Endothelial cell of umbilical vein (primary cell): ENCODE measurements at regions of chr11 and their contacts with region 1.

Region 1: GRCh38 chr11:86456052-86456939 is 81.6 kb downstream of the CCDC81 start:
- DNase-seq: peak; percentile 87
- H3K4me3 ChIP-seq: no peak overlapping the region
- H3K27ac ChIP-seq: peak overlapping the region; percentile 72
- H3K4me1 ChIP-seq: peaks cover 53% of the 10 kb centered on the region
- H3K27me3 ChIP-seq: no peaks in the 10 kb centered on the region
- CTCF ChIP-seq: peak; percentile 80 to 86
- POLR2A ChIP-seq: no peak

Region 2: DNA sequence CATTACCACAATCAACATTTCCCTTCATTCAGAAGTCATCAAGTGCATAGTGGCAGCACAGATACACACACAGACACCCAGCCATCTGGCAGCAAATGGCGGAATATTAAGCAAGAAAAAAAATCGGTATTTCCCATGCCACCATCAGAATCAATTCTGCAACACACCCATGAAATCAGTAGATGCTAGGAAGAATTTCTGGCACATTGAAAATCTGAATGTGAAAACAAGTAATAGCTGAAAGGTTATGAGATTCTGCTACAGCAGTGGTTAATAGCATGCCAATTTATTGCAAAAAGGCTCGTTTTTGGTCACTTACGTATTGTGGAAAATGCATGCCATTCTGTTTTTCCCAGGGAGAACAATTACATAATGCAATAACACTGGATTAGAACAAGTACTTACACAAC is 478.5 kb before region 1 on chr11:
- CTCF ChIA-PET with region 1: no interaction called
- POLR2A ChIA-PET with region 1: no interaction called
- dilution Hi-C with region 1: no loop called
- intact Hi-C with region 1: no loop called
- DNase-seq: no peak
- H3K4me3 ChIP-seq: no peak overlapping the region
- H3K27ac ChIP-seq: no peak overlapping the region
- H3K4me1 ChIP-seq: no peaks in the 10 kb centered on the region
- H3K27me3 ChIP-seq: no peaks in the 10 kb centered on the region
- CTCF ChIP-seq: no peak
- POLR2A ChIP-seq: no peak

Region 3: DNA sequence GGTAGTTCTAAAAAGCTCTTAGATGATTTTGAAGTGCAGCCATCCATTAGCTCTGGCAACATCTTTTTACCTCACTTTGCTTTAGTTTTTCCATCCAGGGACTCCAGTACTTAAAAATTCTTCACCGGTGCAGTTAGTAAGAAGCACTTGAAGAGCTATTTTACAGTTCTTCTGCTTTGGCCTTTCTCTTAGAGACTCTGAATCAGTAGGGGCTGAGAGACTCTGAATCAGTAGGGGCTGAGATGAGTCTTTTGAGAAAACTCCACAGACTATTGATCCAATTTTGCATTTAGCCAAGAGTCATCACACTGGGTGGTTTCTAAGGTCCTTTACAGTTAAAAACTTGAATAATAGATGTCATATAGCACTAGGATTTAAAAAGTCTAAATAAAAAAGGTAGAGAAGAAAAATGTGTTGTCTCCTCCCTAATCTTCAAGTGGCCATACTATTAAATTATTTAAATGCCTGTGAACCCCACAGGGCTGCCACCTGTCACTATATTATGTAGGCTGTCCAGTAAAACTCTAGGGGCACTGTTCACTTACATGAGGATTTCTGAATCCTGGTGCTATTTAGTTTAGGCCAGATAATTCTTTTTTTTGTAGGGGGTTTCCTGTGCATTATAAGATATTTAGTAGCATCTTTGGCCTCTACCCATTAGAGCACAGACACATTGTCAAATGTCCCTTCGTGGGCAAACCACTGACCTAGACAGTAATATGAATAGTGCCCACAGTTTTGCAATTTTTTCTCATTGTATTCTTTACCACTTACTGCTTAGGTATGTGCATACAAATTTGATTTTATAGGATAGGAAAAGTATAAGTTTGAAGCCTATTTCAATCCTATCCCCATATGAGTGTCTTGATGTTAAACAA is 180.6 kb before region 1 on chr11:
- CTCF ChIA-PET with region 1: no interaction called
- POLR2A ChIA-PET with region 1: no interaction called
- dilution Hi-C with region 1: no loop called
- intact Hi-C with region 1: no loop called
- DNase-seq: no peak
- H3K4me3 ChIP-seq: no peak overlapping the region
- H3K27ac ChIP-seq: no peak overlapping the region
- H3K4me1 ChIP-seq: no peaks in the 10 kb centered on the region
- H3K27me3 ChIP-seq: no peaks in the 10 kb centered on the region
- CTCF ChIP-seq: no peak
- POLR2A ChIP-seq: no peak

Region 4: GRCh38 chr11:86403458-86403857 is 52.8 kb before region 1 on chr11:
- CTCF ChIA-PET with region 1: no interaction called
- POLR2A ChIA-PET with region 1: no interaction called
- dilution Hi-C with region 1: no loop called
- intact Hi-C with region 1: no loop called
- DNase-seq: no peak
- H3K4me3 ChIP-seq: no peak overlapping the region
- H3K27ac ChIP-seq: no peak overlapping the region
- H3K4me1 ChIP-seq: no peaks in the 10 kb centered on the region
- H3K27me3 ChIP-seq: no peaks in the 10 kb centered on the region
- CTCF ChIP-seq: no peak
- POLR2A ChIP-seq: no peak

Region 5: GRCh38 chr11:86483940-86484794 is 27.9 kb after region 1 on chr11:
- CTCF ChIA-PET with region 1: interaction called, 20 read pairs
- POLR2A ChIA-PET with region 1: interaction called, 15 read pairs
- dilution Hi-C with region 1: no loop called
- intact Hi-C with region 1: loop called (anchors 1 kb)
- DNase-seq: peak; percentile 100
- H3K4me3 ChIP-seq: no peak overlapping the region
- H3K27ac ChIP-seq: peak overlapping the region; percentile 94
- H3K4me1 ChIP-seq: peaks cover 47% of the 10 kb centered on the region
- H3K27me3 ChIP-seq: no peaks in the 10 kb centered on the region
- CTCF ChIP-seq: no peak
- POLR2A ChIP-seq: peak; percentile 39

Region 6: DNA sequence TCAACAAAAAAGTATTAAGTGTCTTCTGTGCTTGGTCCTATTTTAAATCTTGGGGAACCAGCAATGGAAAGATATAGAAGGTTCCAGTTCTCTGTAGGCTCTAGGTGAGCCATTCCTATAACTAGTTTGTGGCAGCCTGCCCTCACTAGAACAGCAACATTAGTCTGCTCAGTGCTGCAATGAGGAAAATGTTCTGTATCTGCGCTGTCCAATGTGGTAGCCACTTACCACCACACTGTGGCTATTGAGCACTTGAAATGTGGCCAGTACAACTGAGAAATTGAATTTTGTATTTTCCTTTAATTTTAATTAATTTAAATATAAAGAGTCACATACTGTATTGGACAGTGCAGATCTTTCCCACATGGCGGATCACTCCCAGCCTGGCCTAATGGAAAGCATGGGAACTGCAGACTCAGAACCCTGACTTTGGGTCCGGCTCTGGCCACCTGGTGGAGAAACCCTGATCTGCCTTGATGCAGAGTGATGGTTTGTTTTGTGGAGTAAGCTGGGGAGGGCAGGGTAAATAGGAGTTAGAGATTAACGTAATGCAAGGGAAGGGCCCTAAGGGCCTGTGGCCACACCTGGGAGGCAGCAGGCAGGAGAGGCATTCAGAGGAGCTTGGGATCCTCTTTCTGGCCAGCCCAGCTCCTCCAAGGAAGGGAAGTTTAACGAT is 115.1 kb after region 1 on chr11:
- CTCF ChIA-PET with region 1: interaction called, 4 read pairs
- POLR2A ChIA-PET with region 1: no interaction called
- dilution Hi-C with region 1: no loop called
- intact Hi-C with region 1: loop called (anchors 1 kb)
- DNase-seq: peak; percentile 37
- H3K4me3 ChIP-seq: no peak overlapping the region
- H3K27ac ChIP-seq: no peak overlapping the region
- H3K4me1 ChIP-seq: peaks cover 38% of the 10 kb centered on the region
- H3K27me3 ChIP-seq: no peaks in the 10 kb centered on the region
- CTCF ChIP-seq: peak; percentile 48 to 56
- POLR2A ChIP-seq: no peak

Region 7: DNA sequence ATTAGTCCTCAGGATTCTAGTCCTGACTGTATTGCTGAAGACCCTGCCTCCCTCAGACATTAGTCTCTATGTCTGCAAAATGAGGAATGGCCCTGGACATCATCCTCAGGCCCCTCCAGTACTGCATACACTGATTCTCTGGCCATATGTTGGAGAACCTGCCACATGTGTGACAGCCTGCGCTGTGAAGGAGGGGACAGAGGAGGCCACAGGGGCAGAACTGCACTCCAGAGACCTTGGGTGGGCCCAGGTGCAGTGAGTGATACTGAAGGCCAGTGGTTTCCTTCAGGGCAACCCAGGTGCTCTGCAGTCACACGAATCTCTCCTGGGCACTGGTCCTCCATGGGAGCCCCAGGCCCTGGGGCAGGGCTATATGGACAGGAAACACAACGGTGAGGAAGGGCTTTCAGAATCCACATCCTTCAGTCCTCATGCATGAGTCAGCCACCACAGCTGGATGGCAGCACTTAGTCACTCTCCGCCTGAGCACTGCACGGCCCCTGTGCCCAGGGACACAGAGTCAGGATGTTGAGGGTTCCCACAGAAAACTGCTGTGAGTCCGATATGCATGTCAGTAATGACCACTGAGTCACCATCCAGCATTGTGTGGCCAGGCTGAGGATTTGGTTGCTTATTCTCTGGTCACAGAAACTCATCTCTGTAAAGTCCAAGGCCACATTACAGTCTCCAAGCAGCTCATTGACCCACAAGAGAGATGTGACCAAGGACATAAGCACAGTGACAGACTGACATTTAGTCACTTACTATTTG is 176.4 kb after region 1 on chr11:
- CTCF ChIA-PET with region 1: no interaction called
- POLR2A ChIA-PET with region 1: no interaction called
- dilution Hi-C with region 1: no loop called
- intact Hi-C with region 1: loop called (anchors 1 kb)
- DNase-seq: peak; percentile 96
- H3K4me3 ChIP-seq: no peak overlapping the region
- H3K27ac ChIP-seq: peak overlapping the region; percentile 83
- H3K4me1 ChIP-seq: peaks cover 19% of the 10 kb centered on the region
- H3K27me3 ChIP-seq: no peaks in the 10 kb centered on the region
- CTCF ChIP-seq: peak in 1 of 2 donors; percentile 55
- POLR2A ChIP-seq: no peak

Region 8: GRCh38 chr11:86740709-86741483 is 284.6 kb after region 1 on chr11:
- CTCF ChIA-PET with region 1: interaction called, 3 read pairs
- POLR2A ChIA-PET with region 1: no interaction called
- dilution Hi-C with region 1: no loop called
- intact Hi-C with region 1: loop called (anchors 1 kb)
- DNase-seq: peak; percentile 94
- H3K4me3 ChIP-seq: peak overlapping the region in 1 of 3 experiments; percentile 7
- H3K27ac ChIP-seq: peak overlapping the region; percentile 99
- H3K4me1 ChIP-seq: peaks cover 78% of the 10 kb centered on the region
- H3K27me3 ChIP-seq: no peaks in the 10 kb centered on the region
- CTCF ChIP-seq: no peak
- POLR2A ChIP-seq: no peak

Region 9: GRCh38 chr11:86869966-86870570 is 413.8 kb after region 1 on chr11:
- CTCF ChIA-PET with region 1: interaction called, 5 read pairs
- POLR2A ChIA-PET with region 1: no interaction called
- dilution Hi-C with region 1: no loop called
- intact Hi-C with region 1: loop called (anchors 1 kb)
- DNase-seq: peak; percentile 67
- H3K4me3 ChIP-seq: no peak overlapping the region
- H3K27ac ChIP-seq: peak overlapping the region; percentile 16
- H3K4me1 ChIP-seq: no peaks in the 10 kb centered on the region
- H3K27me3 ChIP-seq: no peaks in the 10 kb centered on the region
- CTCF ChIP-seq: peak; percentile 69 to 70
- POLR2A ChIP-seq: no peak